K562 (cell line): ENCODE measurements at regions of chr21 and their contacts with region 1.

Region 1: GRCh38 chr21:33608559-33608958 is 20.1 kb upstream of the DONSON start:
- DNase-seq: no peak
- ATAC-seq: no peak
- H3K4me3 ChIP-seq: no peak overlapping the region
- H3K27ac ChIP-seq: no peak overlapping the region
- H3K4me1 ChIP-seq: no peaks in the 10 kb centered on the region
- H3K27me3 ChIP-seq: no peaks in the 10 kb centered on the region
- CTCF ChIP-seq: no peak
- EP300 ChIP-seq: no peak
- POLR2A ChIP-seq: no peak
- RAD21 ChIP-seq: no peak

Region 2: GRCh38 chr21:33121715-33122475 is 486.7 kb before region 1 on chr21:
- CTCF ChIA-PET with region 1: no interaction called
- POLR2A ChIA-PET with region 1: no interaction called
- in situ Hi-C with region 1: no loop called
- intact Hi-C with region 1: no loop called
- DNase-seq: peak; percentile 78 to 97 (median 95)
- ATAC-seq: peak; percentile 97
- H3K4me3 ChIP-seq: no peak overlapping the region
- H3K27ac ChIP-seq: no peak overlapping the region
- H3K4me1 ChIP-seq: no peaks in the 10 kb centered on the region; a peak in 2 of 5 replicates
- H3K27me3 ChIP-seq: peaks cover 23 to 43% of the 10 kb centered on the region in 2 experiments; a peak in 4 of 5 replicates
- CTCF ChIP-seq: no peak
- EP300 ChIP-seq: no peak
- POLR2A ChIP-seq: no peak
- RAD21 ChIP-seq: no peak

Region 3: DNA sequence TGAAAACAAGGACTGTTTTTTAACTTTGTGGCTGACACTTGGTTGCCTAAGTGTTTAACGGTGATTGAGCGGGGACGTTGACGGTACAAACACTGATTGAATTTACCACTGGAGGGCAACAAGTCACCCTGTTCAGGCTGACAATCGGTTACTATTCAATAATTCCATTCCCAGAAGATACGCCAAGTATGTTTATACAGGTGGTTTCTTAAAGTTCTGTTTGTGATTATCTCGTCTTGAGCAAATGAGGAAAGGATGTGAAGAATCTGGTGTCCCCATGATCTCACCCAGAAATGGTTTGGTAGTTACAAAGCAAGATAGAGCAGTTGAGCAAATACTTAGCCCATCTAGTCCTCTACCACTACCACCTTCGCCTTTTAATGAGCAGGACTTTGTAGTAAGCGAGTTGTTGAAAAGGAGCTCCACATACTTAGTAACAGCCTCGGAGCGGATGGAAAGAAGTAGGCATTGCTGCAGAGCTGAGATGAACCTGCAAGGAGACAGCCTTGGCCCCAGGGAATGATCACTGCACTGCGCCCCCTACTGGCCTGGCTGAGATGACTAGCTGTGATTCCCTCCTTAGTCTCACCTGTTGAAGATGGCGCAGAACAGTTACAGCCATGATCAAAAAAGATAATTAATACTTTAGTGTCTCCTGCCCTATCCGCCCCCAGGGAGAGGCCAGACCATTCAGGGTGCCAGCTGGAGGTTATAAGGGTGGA is 247.5 kb before region 1 on chr21:
- CTCF ChIA-PET with region 1: no interaction called
- POLR2A ChIA-PET with region 1: interaction called, 4 read pairs
- in situ Hi-C with region 1: no loop called
- intact Hi-C with region 1: loop called (anchors 5 kb)
- DNase-seq: peak; percentile 87 to 90 (median 88)
- ATAC-seq: peak; percentile 97
- H3K4me3 ChIP-seq: peak overlapping the region; percentile 23
- H3K27ac ChIP-seq: no peak overlapping the region
- H3K4me1 ChIP-seq: peaks cover 9 to 20% of the 10 kb centered on the region in 2 experiments; a peak in 3 of 5 replicates
- H3K27me3 ChIP-seq: no peaks in the 10 kb centered on the region
- CTCF ChIP-seq: peak; percentile 90 to 97 (median 92)
- EP300 ChIP-seq: no peak
- POLR2A ChIP-seq: no peak
- RAD21 ChIP-seq: peak; percentile 48 to 75

Region 4: GRCh38 chr21:33588485-33589335 is 19.8 kb before region 1 on chr21 and contains the start of gene DONSON:
- CTCF ChIA-PET with region 1: interaction called, 3 read pairs
- POLR2A ChIA-PET with region 1: interaction called, 12 read pairs
- in situ Hi-C with region 1: no loop called
- intact Hi-C with region 1: no loop called
- DNase-seq: peak; percentile 93 to 100 (median 100)
- ATAC-seq: peak; percentile 92
- H3K4me3 ChIP-seq: peak within 1 kb of the TSS; percentile 89
- H3K27ac ChIP-seq: peak within 1 kb of the TSS; percentile 53
- H3K4me1 ChIP-seq: peaks cover 13 to 24% of the 10 kb centered on the region in 2 experiments; a peak in 4 of 5 replicates
- H3K27me3 ChIP-seq: no peaks in the 10 kb centered on the region
- CTCF ChIP-seq: no peak; a peak in 1 of 6 replicates
- EP300 ChIP-seq: no peak
- POLR2A ChIP-seq: peak; percentile 85
- RAD21 ChIP-seq: no peak
- polyA plus RNA-seq, gene DONSON: 26.7 to 30.6 TPM

Region 5: DNA sequence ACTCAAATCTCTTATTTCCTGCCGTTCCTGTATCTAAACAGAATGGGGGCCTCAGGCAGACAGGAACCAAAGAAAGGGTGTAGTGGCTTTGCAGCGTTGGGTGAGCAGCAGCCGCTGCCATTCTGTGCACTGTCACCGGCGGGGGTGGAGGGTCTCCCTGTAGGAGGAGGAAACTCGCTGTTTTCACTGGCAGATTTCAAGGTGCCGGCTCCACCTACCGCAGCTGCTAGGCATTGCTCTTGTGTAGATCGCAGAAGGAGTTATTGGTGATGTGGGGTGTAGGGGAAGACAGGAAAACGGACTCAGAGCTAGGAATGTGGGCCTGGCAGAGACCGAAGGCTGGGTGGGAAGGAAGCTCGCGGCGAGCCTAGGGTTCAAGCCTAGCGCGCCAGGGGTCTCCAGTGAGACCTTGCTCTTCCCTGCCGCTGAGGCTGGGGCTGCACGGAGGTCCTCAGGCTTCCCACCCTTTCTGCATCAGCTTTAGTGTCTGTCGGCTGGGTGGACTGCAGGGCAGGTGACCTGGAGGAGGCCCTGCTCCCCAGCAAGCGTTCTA is 286.3 kb after region 1 on chr21:
- CTCF ChIA-PET with region 1: no interaction called
- POLR2A ChIA-PET with region 1: no interaction called
- in situ Hi-C with region 1: no loop called
- intact Hi-C with region 1: loop called (anchors 5 kb)
- DNase-seq: peak; percentile 84 to 92 (median 86)
- ATAC-seq: peak; percentile 97
- H3K4me3 ChIP-seq: no peak overlapping the region
- H3K27ac ChIP-seq: no peak overlapping the region
- H3K4me1 ChIP-seq: peaks cover 2 to 12% of the 10 kb centered on the region in 2 experiments; a peak in 4 of 5 replicates
- H3K27me3 ChIP-seq: peaks cover 10 to 15% of the 10 kb centered on the region in 2 experiments; a peak in 4 of 5 replicates
- CTCF ChIP-seq: peak; percentile 88 to 92 (median 92)
- EP300 ChIP-seq: no peak
- POLR2A ChIP-seq: no peak
- RAD21 ChIP-seq: peak; percentile 86 to 92